ENCODE measurements at regions of chr1 and their contacts with region 1.

Region 1: DNA sequence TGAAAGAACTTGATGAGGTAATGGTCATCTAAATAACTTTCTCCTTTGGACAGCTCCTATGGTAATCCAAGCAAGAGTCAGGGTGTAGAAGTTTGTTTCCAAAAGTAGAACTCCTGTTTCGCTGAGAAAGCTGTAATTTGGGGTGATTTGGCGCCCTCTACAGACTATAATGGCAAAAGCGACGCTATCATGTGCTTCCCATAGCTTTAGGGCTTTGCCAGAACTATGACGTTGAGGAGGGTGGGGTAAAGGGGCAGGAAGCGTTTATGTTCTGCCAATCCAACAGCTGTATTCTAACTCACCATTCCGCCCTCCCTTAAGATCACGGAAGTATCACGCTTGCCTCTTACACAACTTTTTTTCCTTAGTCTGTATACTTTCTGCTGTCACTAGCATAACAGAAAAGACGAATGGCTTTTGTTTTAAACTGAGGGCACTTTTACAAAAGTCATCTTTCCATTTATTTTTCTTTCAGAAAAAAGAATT is at the start of gene FMO4:
- DNase-seq: peak; percentile 83
- CTCF ChIP-seq: peak; percentile 59

Region 2: DNA sequence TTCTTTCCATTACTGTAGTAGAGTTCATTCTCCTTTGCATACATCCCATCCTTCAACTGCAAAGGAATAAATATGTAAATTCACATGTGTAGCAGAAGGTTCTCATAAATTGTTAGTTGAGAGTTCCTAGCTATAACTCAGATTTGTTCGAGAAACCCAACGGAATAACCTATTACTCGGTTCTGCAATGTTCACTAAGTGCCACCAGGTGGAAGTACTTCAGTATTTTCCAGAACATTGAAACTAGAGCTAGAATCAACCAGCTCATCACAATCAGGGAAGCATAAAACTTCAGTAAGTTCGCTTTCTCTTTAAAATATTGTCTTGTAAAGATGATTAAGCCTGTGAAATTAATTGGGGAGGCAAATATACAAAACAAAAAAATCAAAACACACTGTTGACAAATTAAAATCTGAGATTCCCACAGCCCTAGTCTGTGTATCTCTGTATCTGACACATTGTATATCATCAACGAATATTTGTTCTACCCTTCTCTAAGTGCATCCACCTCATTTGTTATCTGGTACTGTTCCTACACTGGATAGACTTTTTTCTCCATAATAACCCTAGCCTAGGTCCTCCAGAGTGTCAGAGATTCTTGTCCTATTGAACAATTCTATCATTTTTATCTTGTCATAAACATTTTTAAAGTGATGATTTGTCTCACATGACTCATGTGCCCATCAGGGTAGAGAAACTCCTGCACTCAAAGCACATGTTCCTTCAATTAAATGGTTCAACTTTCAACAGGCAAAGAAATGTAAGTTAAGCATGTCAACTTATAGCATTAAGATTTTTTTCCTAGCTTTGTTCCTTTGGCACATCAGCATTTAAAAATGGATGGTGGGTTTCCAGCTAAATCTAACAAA is 346.6 kb before region 1 on chr1:
- CTCF ChIA-PET with region 1: interaction called, 27 read pairs
- POLR2A ChIA-PET with region 1: no interaction called
- DNase-seq: peak; percentile 23
- CTCF ChIP-seq: peak; percentile 38

Region 3: GRCh38 chr1:171245458-171246064 is 68.3 kb before region 1 on chr1:
- CTCF ChIA-PET with region 1: interaction called, 76 read pairs
- POLR2A ChIA-PET with region 1: no interaction called
- DNase-seq: peak; percentile 38
- CTCF ChIP-seq: peak; percentile 71

Region 4: DNA sequence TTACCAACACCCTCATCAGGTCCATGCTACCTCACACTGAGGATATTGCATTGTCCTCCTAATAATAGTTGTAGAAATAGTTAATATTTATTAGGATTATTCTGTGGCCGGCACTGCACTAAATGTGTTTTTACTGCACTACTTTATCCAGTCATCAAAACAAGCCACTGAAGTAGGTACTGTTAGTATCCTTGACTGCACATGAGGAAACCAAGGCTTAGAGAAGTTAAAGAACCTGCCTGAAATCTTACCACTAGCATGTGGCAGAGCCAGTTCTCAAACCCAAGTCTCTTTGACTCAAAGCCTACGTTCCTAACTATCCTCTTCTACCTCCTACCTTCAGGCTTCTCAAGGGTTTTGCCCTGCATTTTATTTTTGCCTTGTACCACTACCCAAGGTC is 34.6 kb before region 1 on chr1:
- CTCF ChIA-PET with region 1: interaction called, 10 read pairs
- POLR2A ChIA-PET with region 1: no interaction called
- DNase-seq: no peak
- CTCF ChIP-seq: no peak

Region 5: DNA sequence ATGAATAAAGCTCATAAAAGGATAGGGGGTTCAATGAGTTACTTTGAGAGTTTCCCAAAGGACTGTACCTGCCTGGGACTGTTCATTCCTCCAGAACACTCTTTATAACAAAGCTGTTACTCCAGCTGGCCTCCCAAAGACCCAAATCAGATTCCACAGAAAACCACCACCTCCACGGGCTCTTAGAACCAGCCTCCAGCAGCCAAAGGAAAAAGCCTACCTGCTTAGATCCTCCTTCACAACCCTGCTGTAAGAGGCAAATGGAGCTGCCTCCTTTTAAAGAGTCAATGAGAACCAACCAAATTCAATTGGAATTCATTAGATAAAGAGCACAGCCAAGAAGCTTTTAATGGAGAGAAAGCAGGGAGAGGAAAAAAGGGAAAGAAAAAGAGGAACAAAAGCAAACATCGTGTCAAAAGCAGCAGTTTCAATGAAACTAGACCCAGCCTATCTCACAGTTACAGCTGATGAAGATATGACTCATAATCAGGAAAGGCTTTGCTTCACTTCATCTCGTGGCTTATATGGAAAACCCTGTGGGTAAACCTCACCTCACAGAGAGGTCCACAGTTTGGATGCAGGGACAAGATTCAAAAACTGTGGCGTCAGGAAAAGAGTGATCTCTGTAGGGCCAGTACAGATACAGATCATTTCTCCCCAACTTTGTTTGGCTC is 27.7 kb before region 1 on chr1:
- CTCF ChIA-PET with region 1: interaction called, 18 read pairs
- POLR2A ChIA-PET with region 1: no interaction called
- DNase-seq: no peak
- CTCF ChIP-seq: no peak

Region 6: DNA sequence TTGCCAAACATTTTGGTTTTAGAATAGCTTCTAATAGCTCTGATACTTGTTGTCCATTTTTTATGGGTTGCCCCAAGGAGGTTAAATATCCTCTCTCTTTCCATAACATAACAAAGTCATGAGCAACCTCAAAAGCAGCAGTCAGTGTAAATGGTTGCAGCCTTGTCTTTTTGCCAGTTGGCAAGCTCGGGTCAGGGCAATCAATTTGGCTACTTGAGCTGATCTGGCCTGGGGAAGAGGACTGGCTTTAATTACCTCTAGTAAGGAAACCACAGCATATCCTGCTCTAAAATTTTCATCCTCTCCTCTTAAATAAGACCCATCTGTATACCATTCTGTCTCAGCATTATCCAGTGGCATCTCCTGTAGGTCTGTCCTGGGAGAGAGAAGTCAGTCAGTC is 21.1 kb before region 1 on chr1:
- CTCF ChIA-PET with region 1: interaction called, 14 read pairs
- POLR2A ChIA-PET with region 1: no interaction called
- DNase-seq: no peak
- CTCF ChIP-seq: no peak

Measured in GM10248 (cell line).